Dorsolateral prefrontal cortex (tissue), 120 donors: ENCODE measurements at regions of chr16 and their contacts with region 1.

Region 1: DNA sequence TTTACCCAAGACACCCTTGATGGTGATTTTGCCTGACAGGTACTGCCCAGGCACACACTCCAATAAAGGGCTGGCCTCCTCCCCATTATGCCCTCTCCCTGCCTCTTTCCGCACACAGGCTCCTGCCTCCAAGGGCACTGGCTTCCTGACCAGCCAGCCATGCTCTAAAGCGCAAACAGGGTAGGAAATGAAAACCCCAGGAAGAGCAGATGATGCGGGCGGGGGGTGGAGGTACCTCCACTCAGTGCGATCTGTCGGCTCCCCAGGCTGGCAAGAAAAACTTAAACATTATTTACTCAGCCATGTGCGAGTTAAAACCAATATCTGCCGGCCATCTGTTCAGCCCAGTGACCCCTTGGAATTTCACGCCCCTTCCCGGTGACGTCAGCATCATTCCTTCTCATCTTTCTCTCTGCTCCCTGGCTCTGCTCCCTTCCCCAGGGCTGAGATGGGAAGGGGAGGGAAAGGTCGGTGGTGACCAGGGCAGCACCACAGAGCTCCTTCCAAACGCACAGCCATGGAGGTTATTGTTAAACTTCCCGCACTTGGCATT is 262.5 kb downstream of the CBLN1 start:
- DNase-seq: peak in 1 of 10 donors; percentile 95
- H3K4me3 ChIP-seq: no peak overlapping the region
- H3K27ac ChIP-seq: peak overlapping the region in 1 of 59 donors; percentile 89
- H3K27me3 ChIP-seq: peaks cover 0 to 30% (median 4%) of the 10 kb centered on the region in 45 donors
- CTCF ChIP-seq: no peak

Region 2: DNA sequence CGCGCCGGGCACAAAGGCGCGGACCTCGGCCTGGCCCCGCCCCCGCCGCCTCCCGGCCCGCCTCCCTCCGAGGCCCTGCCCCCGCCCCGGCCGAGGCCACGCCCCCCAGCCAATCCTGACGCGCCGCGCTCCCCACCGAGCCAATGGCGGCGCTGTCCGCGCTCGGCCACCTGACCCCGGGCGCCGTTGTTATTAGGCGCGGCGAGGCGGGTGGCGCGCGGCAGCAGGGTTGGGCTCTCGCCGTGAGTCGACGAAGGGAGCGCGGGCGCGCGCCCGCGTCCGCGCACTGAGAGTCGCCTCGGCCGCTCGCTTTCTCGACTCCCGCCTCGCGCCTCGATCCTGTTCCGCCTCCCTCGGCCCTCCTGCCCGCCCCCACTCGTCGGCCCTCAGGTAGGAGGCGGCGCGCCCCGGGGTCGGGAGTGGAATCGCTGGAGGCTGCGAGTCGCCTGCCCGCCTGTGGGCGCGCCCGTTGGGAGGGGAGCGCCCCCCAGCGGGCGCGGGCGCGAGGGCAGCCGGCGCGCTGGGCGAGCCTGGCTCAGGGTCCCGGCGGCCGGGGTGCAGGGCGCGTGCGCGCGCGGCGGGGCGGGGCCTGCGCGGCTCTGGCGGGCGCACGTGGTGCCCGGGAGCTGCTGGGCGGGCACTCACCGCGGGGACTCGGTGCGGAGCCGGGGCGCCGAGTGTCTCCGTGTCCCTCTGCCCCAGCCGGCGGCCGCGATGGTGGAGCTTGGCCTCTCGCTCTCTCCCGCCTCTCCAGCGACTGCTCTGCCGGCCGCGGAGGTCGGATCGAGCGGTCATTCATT is 262.9 kb after region 1 on chr16:
- intact Hi-C with region 1: loop called in 1 of 2 experiments (anchors 10 kb)
- DNase-seq: peak; percentile 82 to 96 (median 86)
- H3K4me3 ChIP-seq: peak overlapping the region; percentile 47 to 82 (median 70)
- H3K27ac ChIP-seq: peak overlapping the region in 33 of 59 donors; percentile 28 to 92 (median 79)
- H3K27me3 ChIP-seq: peaks cover 4 to 94% (median 71%) of the 10 kb centered on the region in 45 donors
- CTCF ChIP-seq: peak in 53 of 56 donors; percentile 12 to 75 (median 51)

Region 3: DNA sequence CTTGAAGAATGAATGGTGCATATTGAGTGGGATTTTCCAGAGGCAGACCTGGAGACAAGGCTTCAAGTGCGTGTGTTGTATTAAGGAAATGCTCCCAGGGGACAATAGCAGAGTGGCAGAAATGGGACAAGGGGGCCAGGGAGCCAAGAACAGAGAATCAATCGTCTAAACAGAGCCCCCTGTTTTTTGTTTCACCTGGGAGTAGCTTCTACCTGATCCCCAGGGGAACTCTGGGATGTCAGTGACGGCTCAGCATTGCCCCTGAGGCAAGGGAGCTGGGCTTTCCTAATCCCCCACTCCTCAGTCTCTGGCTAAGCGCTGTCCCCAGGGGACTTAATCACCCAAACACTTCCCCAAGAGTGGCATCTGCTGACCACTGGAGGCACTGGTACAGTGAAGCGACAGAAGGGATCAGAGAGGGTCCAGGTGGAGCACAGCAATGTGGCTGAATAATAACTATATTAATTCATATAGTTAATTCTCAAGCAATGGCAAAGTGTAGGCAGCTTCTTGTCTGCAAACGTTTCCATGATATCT is 318.7 kb after region 1 on chr16:
- intact Hi-C with region 1: no loop called
- DNase-seq: no peak
- H3K4me3 ChIP-seq: no peak overlapping the region
- H3K27ac ChIP-seq: no peak overlapping the region
- H3K27me3 ChIP-seq: peaks cover 0 to 72% (median 41%) of the 10 kb centered on the region in 45 donors
- CTCF ChIP-seq: no peak